ENCODE measurements at regions of chr7 and their contacts with region 1.

Region 1: GRCh38 chr7:44097064-44097932 is 6.8 kb upstream of the AEBP1 start:
- DNase-seq: peak; percentile 81
- ATAC-seq: peak; percentile 86
- H3K4me3 Mint-ChIP-seq: peak overlapping the region; percentile 14
- H3K27ac Mint-ChIP-seq: peak overlapping the region; percentile 86
- H3K4me1 Mint-ChIP-seq: peaks cover 25% of the 10 kb centered on the region
- H3K27me3 Mint-ChIP-seq: no peaks in the 10 kb centered on the region
- CTCF ChIP-seq: no peak

Region 2: GRCh38 chr7:44085554-44085953 is 11.7 kb before region 1 on chr7:
- CTCF ChIA-PET with region 1: interaction called, 21 read pairs
- POLR2A ChIA-PET with region 1: interaction called, 6 read pairs
- intact Hi-C with region 1: no loop called
- DNase-seq: no peak
- ATAC-seq: no peak
- H3K4me3 Mint-ChIP-seq: no peak overlapping the region
- H3K27ac Mint-ChIP-seq: no peak overlapping the region
- H3K4me1 Mint-ChIP-seq: peaks cover 17% of the 10 kb centered on the region
- H3K27me3 Mint-ChIP-seq: no peaks in the 10 kb centered on the region
- CTCF ChIP-seq: no peak

Region 3: DNA sequence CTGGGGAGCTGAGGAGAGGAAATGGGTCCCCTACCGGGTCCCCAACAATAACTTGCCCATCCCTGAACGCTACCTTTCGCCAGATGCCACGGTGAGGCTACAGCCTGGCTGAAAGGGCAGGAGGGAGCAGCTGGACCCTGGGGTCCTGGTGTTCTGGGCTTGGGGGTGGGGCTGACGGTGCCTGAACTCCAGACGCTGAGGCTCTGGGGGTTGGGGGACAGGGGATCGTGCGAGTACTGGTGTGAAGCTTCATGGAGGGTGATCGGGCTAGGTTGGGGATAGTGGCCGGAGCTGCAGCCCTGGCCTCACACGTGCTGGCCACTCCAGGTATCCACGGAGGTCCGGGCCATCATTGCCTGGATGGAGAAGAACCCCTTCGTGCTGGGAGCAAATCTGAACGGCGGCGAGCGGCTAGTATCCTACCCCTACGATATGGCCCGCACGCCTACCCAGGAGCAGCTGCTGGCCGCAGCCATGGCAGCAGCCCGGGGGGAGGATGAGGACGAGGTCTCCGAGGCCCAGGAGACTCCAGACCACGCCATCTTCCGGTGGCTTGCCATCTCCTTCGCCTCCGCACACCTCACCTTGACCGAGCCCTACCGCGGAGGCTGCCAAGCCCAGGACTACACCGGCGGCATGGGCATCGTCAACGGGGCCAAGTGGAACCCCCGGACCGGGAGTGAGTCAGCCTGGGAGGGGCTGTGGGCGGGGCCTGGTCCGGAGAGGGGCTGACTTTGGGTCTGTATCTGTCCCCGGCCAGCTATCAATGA is 15.1 kb after region 1 on chr7:
- CTCF ChIA-PET with region 1: interaction called, 3 read pairs
- POLR2A ChIA-PET with region 1: interaction called, 11 read pairs
- intact Hi-C with region 1: no loop called
- DNase-seq: no peak
- ATAC-seq: no peak
- H3K4me3 Mint-ChIP-seq: no peak overlapping the region
- H3K27ac Mint-ChIP-seq: no peak overlapping the region
- H3K4me1 Mint-ChIP-seq: no peaks in the 10 kb centered on the region
- H3K27me3 Mint-ChIP-seq: no peaks in the 10 kb centered on the region
- CTCF ChIP-seq: no peak

Region 4: GRCh38 chr7:44223362-44224079 is 126.2 kb after region 1 on chr7:
- CTCF ChIA-PET with region 1: no interaction called
- POLR2A ChIA-PET with region 1: no interaction called
- intact Hi-C with region 1: no loop called
- DNase-seq: no peak
- ATAC-seq: no peak
- H3K4me3 Mint-ChIP-seq: no peak overlapping the region
- H3K27ac Mint-ChIP-seq: no peak overlapping the region
- H3K4me1 Mint-ChIP-seq: no peaks in the 10 kb centered on the region
- H3K27me3 Mint-ChIP-seq: no peaks in the 10 kb centered on the region
- CTCF ChIP-seq: no peak